ENCODE measurements at regions of chr2 and their contacts with region 1.

Region 1: GRCh38 chr2:127064642-127065250 is 42.2 kb downstream of the BIN1 start:
- DNase-seq: peak; percentile 98
- H3K4me3 Mint-ChIP-seq: no peak overlapping the region
- H3K27ac Mint-ChIP-seq: peak overlapping the region; percentile 84
- H3K4me1 Mint-ChIP-seq: peaks cover 26% of the 10 kb centered on the region
- H3K27me3 Mint-ChIP-seq: no peaks in the 10 kb centered on the region
- CTCF ChIP-seq: peak; percentile 13

Region 2: DNA sequence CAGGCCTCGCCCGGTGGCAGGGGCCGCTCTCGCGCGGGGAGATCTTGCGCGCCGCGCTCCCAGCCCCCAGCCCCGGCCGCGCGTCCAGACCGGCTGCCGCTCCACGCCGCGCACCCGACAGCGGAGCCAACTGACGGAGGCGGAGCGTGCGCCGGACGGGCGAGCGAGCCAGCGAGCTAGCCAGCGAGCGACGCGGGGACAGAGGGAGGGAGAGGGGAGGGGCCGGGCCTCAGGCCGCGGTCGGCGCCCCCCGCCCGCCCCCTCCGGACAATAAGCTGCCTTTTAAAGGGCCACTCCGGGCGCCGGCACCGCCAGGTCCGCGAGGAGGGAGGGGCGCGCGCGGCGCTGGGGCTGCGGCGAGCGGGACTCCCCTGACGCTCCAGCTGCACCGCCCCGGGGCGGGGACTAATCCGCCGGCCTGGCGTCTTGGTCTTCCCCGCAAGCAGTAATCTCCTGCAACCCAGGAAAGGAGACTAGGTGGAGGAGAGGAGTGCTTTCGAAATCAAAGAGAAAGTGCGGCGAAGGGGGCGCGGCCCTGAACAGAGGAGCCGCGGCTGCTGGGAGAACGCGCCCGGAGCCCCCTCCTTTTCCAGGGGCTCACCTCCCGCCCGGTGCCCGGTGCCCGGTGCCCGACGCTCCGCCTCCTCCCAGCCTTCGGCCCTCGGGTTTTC is 42.3 kb after region 1 on chr2 and contains the start of gene BIN1:
- CTCF ChIA-PET with region 1: interaction called, 3 read pairs
- POLR2A ChIA-PET with region 1: interaction called, 5 read pairs
- intact Hi-C with region 1: loop called (anchors 1 kb)
- DNase-seq: peak; percentile 88
- H3K4me3 Mint-ChIP-seq: peak within 1 kb of the TSS; percentile 80
- H3K27ac Mint-ChIP-seq: no peak within 1 kb of the TSS
- H3K4me1 Mint-ChIP-seq: peaks cover 19% of the 10 kb centered on the region
- H3K27me3 Mint-ChIP-seq: no peaks in the 10 kb centered on the region
- CTCF ChIP-seq: no peak
- total RNA-seq, gene BIN1: 22.4 and 29.6 TPM in 2 replicates

Region 3: DNA sequence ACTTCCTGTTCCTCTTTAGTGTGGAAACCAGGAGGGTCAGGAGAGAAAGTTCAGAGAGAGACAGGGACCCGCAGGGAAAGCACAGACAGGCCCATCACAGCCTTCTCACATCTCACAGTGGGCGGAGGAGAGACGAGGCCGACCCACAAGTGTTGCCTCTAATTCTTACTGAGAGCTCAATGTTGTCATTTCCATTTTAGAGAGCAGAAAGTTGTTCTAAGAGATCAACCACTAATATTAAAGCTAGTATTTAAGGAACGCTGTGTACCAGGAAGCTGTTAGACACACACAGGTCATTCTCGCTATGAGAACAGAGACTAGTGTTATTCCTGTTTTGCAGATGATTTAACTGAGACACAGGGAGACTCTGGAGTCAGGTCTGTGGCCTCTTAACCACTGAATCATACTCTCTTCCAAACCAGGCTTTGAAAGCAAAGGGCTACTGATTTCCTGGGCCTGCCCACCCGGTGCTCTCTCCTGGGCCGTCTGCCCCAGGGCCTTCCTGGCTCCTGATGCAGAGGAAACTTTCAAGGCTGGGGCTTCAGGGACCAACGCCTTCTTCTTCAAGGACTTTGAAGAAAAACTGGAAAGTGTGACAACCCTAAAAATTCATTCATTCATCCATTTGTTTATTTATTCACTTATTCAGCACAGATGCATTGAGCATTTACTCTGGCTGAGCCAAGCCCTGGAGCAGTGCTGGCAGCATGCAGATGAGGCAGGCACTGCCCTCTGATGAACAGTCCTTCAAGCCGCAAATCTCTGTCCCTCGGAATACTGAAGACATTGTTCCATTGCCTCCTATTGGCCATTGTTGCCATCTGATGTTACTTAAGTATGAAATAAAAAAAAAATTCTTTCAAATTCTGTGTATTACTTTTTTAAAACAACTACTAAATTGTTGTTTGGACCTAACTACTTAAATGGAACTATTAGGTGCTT is 79.4 kb after region 1 on chr2:
- CTCF ChIA-PET with region 1: interaction called, 5 read pairs
- POLR2A ChIA-PET with region 1: no interaction called
- intact Hi-C with region 1: loop called (anchors 1 kb)
- DNase-seq: peak; percentile 42
- H3K4me3 Mint-ChIP-seq: no peak overlapping the region
- H3K27ac Mint-ChIP-seq: peak overlapping the region; percentile 49
- H3K4me1 Mint-ChIP-seq: peaks cover 22% of the 10 kb centered on the region
- H3K27me3 Mint-ChIP-seq: no peaks in the 10 kb centered on the region
- CTCF ChIP-seq: no peak

Region 4: GRCh38 chr2:127174136-127174535 is 109.4 kb after region 1 on chr2:
- CTCF ChIA-PET with region 1: interaction called, 15 read pairs
- POLR2A ChIA-PET with region 1: no interaction called
- intact Hi-C with region 1: loop called (anchors 2 kb)
- DNase-seq: peak; percentile 43
- H3K4me3 Mint-ChIP-seq: no peak overlapping the region
- H3K27ac Mint-ChIP-seq: no peak overlapping the region
- H3K4me1 Mint-ChIP-seq: peaks cover 23% of the 10 kb centered on the region
- H3K27me3 Mint-ChIP-seq: no peaks in the 10 kb centered on the region
- CTCF ChIP-seq: peak; percentile 51

Measured in MCF 10A (cell line).